B cell (primary cell): ENCODE measurements at regions of chr21 and their contacts with region 1.

Region 1: GRCh38 chr21:33386222-33386784 is 16.9 kb upstream of the IFNGR2 start:
- DNase-seq: no peak
- ATAC-seq: no peak
- H3K4me3 ChIP-seq: no peak overlapping the region
- H3K4me3 Mint-ChIP-seq: no peak overlapping the region
- H3K27ac ChIP-seq: peak overlapping the region in 1 of 2 donors; percentile 39
- H3K27ac Mint-ChIP-seq: peak overlapping the region; percentile 53
- H3K4me1 ChIP-seq: peaks cover 42 to 66% of the 10 kb centered on the region in 2 donors
- H3K4me1 Mint-ChIP-seq: peaks cover 63% of the 10 kb centered on the region
- H3K27me3 ChIP-seq: no peaks in the 10 kb centered on the region
- H3K27me3 Mint-ChIP-seq: no peaks in the 10 kb centered on the region
- CTCF ChIP-seq: no peak

Region 2: GRCh38 chr21:33396947-33397346 is 10.6 kb after region 1 on chr21:
- CTCF ChIA-PET with region 1: interaction called, 10 read pairs
- POLR2A ChIA-PET with region 1: interaction called, 27 read pairs
- intact Hi-C with region 1: loop called (anchors 1 kb)
- DNase-seq: no peak
- ATAC-seq: no peak
- H3K4me3 ChIP-seq: no peak overlapping the region
- H3K4me3 Mint-ChIP-seq: no peak overlapping the region
- H3K27ac ChIP-seq: no peak overlapping the region
- H3K27ac Mint-ChIP-seq: no peak overlapping the region
- H3K4me1 ChIP-seq: peaks cover 41 to 62% of the 10 kb centered on the region in 2 donors
- H3K4me1 Mint-ChIP-seq: peaks cover 58% of the 10 kb centered on the region
- H3K27me3 ChIP-seq: no peaks in the 10 kb centered on the region
- H3K27me3 Mint-ChIP-seq: no peaks in the 10 kb centered on the region
- CTCF ChIP-seq: no peak